HEK293 (cell line): ENCODE measurements at regions of chr15 and their contacts with region 1.

Region 1: GRCh38 chr15:59917504-59918157 is 86.5 kb upstream of the FOXB1 start:
- H3K4me3 ChIP-seq: no peak overlapping the region
- H3K27ac ChIP-seq: no peak overlapping the region
- H3K4me1 ChIP-seq: peaks cover 13% of the 10 kb centered on the region
- CTCF ChIP-seq: peak; percentile 76

Region 2: DNA sequence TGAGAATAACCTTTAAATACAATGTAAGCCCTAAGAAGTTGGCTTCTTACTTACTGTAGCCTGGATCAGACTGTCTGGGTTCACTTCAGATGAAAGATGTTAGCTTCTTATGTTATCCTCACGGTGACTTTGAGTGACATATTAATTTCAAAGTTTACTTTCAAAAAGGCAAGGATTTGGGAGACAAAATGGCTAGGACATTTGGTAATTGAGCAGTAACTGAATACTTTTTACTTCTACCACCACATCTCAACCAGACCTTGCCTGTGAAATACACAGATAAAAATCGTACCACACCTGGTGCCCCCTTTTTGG is 192.5 kb before region 1 on chr15:
- CTCF ChIA-PET with region 1: interaction called, 11 read pairs
- POLR2A ChIA-PET with region 1: no interaction called
- H3K4me3 ChIP-seq: no peak overlapping the region
- H3K27ac ChIP-seq: no peak overlapping the region
- H3K4me1 ChIP-seq: no peaks in the 10 kb centered on the region
- CTCF ChIP-seq: no peak

Region 3: GRCh38 chr15:59828871-59829270 is 88.8 kb before region 1 on chr15:
- CTCF ChIA-PET with region 1: interaction called, 10 read pairs
- POLR2A ChIA-PET with region 1: no interaction called
- H3K4me3 ChIP-seq: no peak overlapping the region
- H3K27ac ChIP-seq: no peak overlapping the region
- H3K4me1 ChIP-seq: peaks cover 3% of the 10 kb centered on the region; the same call in 1 of the 2 replicates
- CTCF ChIP-seq: no peak

Region 4: GRCh38 chr15:59933607-59934006 is 16.0 kb after region 1 on chr15:
- CTCF ChIA-PET with region 1: interaction called, 20 read pairs
- POLR2A ChIA-PET with region 1: no interaction called
- H3K4me3 ChIP-seq: no peak overlapping the region
- H3K27ac ChIP-seq: no peak overlapping the region
- H3K4me1 ChIP-seq: peaks cover 9% of the 10 kb centered on the region
- CTCF ChIP-seq: no peak

Region 5: GRCh38 chr15:59953392-59953883 is 35.8 kb after region 1 on chr15:
- CTCF ChIA-PET with region 1: interaction called, 14 read pairs
- POLR2A ChIA-PET with region 1: interaction called, 4 read pairs
- H3K4me3 ChIP-seq: no peak overlapping the region
- H3K27ac ChIP-seq: peak overlapping the region; percentile 83
- H3K4me1 ChIP-seq: peaks cover 8% of the 10 kb centered on the region
- CTCF ChIP-seq: no peak

Region 6: DNA sequence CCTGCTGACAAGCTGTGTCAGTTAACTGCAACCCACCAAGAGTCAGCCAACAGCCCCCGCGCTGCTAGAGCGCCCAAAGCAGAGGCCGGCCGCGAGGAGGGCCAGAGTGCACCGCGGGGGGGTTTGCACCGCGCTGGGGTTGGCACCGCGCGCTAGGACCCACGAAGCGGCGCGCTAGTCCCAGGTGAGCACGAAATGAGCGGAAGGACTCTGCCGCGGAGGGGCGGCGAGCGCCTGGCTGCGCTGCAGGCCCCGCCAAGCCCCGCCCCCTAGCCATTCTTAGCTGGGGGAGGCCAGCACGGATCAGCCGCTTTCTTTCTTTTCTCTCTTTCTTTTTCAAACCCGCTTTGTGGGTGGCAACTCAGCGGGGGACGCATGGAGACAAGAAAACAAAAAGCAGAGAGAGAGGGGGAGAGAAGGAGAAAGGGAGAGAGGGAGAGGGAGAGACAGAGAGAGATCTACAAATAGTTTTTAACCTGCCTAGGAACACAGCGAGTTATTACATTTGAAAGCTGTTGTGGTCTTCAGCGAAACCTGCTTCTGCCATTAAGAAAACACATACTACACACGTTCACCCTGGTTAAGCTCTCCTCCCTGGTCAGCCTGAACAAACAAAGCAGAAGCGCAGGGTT is 79.6 kb after region 1 on chr15:
- CTCF ChIA-PET with region 1: interaction called, 10 read pairs
- POLR2A ChIA-PET with region 1: no interaction called
- H3K4me3 ChIP-seq: peak overlapping the region; percentile 20
- H3K27ac ChIP-seq: peak overlapping the region; percentile 79
- H3K4me1 ChIP-seq: peaks cover 23% of the 10 kb centered on the region
- CTCF ChIP-seq: no peak

Region 7: DNA sequence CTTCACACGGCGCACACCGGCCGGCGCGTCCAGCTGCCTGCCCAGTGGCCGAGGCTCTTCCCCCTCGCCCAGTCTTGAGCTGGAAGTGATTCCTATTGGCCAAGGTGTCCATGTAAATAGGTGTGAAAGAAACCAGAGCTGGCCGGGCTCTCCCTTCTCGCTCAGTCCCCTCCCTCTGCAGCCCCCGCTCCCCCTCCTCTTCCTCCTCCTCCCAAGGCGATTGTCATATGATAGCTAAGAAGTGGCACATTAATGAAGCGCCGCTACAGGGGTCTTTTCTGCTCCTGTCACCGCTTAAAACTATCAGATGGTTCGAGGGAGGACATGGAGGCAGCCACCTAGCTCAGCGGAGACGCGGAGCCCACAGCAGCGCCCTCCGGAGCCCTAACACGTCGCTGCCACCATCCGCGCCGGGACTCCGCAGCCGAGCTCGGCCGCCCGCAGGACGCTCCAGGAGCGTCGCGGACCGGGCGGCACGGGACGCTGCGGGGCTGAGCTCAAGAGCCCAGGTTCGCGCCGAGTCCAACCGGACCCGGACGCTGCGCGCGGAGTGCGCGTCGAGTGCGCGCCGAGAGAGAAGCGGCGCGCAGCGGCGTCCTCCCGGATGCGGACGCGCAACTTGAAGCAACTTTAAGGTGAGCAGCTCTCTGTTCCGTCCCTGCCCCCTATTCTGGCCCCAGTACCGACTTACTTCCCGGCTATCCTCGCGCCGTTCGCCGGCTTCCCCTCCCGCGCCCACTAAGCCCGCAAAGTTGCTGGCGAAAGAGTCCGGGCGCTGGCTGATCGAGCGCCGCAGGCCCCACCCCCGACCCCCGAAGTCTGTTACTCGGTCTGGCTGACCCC is 86.6 kb after region 1 on chr15 and contains the start of gene FOXB1:
- CTCF ChIA-PET with region 1: interaction called, 24 read pairs
- POLR2A ChIA-PET with region 1: interaction called, 4 read pairs
- H3K4me3 ChIP-seq: peak within 1 kb of the TSS; percentile 54
- H3K27ac ChIP-seq: peak within 1 kb of the TSS; percentile 99
- H3K4me1 ChIP-seq: peaks cover 25% of the 10 kb centered on the region
- CTCF ChIP-seq: peak; percentile 69; the same call in 1 of the 2 replicates